ENCODE measurements at regions of chr20 and their contacts with region 1.

Region 1: GRCh38 chr20:38446441-38447209 is 11.5 kb upstream of the SNHG17 start:
- DNase-seq: peak; percentile 99
- H3K4me3 Mint-ChIP-seq: peak overlapping the region; percentile 78
- H3K27ac Mint-ChIP-seq: peak overlapping the region; percentile 75
- H3K4me1 Mint-ChIP-seq: peaks cover 23% of the 10 kb centered on the region
- H3K27me3 Mint-ChIP-seq: peaks cover 25% of the 10 kb centered on the region
- CTCF ChIP-seq: peak; percentile 97

Region 2: DNA sequence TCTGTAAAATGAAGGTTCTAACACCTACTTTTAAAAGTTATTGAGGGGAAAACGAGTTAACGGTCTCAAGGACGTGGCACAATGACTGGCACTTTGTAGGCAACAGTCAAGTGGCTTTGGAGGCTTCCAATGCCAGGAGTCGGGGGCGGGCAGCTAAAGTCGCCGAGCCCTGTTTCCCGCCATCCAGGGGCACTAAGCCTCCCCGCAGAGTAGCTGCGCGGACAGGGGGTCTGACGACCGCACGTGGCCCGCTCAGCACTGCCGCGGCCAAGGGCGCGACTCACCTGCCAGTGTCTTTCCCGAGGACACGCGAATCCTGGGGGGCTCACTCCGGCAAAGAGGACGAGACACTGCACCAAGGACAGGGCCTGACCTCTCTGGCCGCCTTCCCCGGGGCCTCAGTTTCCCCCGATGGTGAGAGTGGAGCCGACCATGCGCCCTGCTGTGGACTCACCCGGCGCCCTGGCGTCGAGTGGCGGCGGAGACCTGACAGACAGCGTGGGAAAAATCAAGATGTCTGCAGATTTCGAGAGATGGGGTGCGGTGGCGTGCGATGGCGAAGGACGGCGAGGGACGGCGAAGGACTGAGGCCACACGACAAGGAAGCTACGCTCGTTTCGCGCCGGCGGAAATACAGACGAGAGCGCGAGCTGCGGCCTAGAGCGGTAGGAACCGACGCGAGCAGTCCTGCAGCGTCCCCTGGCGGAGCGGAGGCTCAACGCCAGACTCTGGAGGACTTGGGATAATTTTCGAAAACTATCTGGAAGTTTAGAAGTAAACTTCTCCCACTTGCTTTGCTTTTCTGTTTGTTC is 11.7 kb before region 1 on chr20 and contains the start of gene SNHG17:
- CTCF ChIA-PET with region 1: interaction called, 39 read pairs
- intact Hi-C with region 1: loop called (anchors 1 kb)
- DNase-seq: peak; percentile 95
- H3K4me3 Mint-ChIP-seq: peak within 1 kb of the TSS; percentile 88
- H3K27ac Mint-ChIP-seq: peak within 1 kb of the TSS; percentile 90
- H3K4me1 Mint-ChIP-seq: peaks cover 24% of the 10 kb centered on the region
- H3K27me3 Mint-ChIP-seq: peaks cover 20% of the 10 kb centered on the region
- CTCF ChIP-seq: peak; percentile 100
- total RNA-seq, gene SNHG17: 111 and 114 TPM in 2 replicates

Region 3: DNA sequence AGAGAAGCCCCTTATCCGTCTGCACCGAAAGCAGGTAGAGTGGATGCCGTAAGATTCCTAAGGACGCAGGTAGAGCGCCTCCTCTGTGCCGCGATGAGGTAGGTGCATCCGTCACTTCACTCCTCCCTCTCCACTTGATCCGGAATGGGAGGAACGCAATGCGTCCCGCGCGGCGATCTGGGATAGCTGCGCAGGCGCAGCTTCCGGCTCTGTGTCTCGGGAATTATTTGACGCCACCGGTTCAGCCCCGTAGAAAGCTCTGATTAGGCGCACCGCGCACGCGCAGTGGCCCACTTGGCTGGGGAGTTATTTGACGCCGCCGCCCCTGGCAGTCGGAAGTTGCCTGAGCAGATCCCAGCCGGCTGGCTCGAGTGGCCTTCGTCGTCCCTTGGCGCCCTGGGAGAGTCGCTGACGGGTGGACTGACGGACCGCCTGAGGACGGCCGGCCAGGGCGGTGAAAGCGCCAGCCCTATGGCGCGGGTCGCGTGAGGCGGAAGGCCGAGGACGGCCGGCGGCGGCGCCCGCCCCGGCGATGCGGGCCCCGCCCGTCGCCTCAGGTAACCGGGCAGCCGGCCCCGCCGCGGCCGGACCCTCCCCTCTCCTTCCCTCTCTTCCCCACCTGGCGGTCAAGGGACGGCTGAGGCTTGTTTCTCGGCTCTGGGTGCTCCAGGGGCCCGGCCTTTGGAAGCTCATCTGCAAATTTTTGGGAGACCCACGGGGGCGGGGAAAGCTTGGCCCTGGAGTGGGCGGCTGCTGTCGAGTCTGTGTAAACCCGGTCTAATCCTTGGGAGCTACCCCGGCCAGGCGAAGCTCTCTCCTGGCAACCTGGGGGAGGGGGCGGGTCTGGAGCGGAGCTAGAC is 26.1 kb after region 1 on chr20 and contains the start of gene RALGAPB:
- CTCF ChIA-PET with region 1: interaction called, 48 read pairs
- intact Hi-C with region 1: loop called (anchors 1 kb)
- DNase-seq: peak; percentile 100
- H3K4me3 Mint-ChIP-seq: peak within 1 kb of the TSS; percentile 82
- H3K27ac Mint-ChIP-seq: peak within 1 kb of the TSS; percentile 55
- H3K4me1 Mint-ChIP-seq: peaks cover 31% of the 10 kb centered on the region
- H3K27me3 Mint-ChIP-seq: no peaks in the 10 kb centered on the region
- CTCF ChIP-seq: peak; percentile 45
- total RNA-seq, gene RALGAPB: 59.8 and 62.5 TPM in 2 replicates

Region 4: GRCh38 chr20:38900606-38901005 is 454.0 kb after region 1 on chr20:
- CTCF ChIA-PET with region 1: no interaction called
- intact Hi-C with region 1: no loop called
- DNase-seq: no peak
- H3K4me3 Mint-ChIP-seq: no peak overlapping the region
- H3K27ac Mint-ChIP-seq: no peak overlapping the region
- H3K4me1 Mint-ChIP-seq: no peaks in the 10 kb centered on the region
- H3K27me3 Mint-ChIP-seq: peaks cover 85% of the 10 kb centered on the region
- CTCF ChIP-seq: no peak